Heart left ventricle (tissue), 16 donors: ENCODE measurements at regions of chr3 and their contacts with region 1.

Region 1: GRCh38 chr3:111967651-111968274 is 11.1 kb upstream of the ABHD10 start:
- DNase-seq: peak; percentile 74 to 89 (median 82)
- ATAC-seq: peak; percentile 50 to 84 (median 76)
- H3K4me3 ChIP-seq: no peak overlapping the region
- H3K27ac ChIP-seq: peak overlapping the region in 11 of 12 donors; percentile 24 to 68 (median 58)
- H3K4me1 ChIP-seq: peaks cover 0 to 47% (median 25%) of the 10 kb centered on the region in 12 donors
- H3K27me3 ChIP-seq: no peaks in the 10 kb centered on the region
- CTCF ChIP-seq: peak; percentile 78 to 95 (median 88)
- POLR2A ChIP-seq: no peak

Region 2: GRCh38 chr3:111668912-111669488 is 298.8 kb before region 1 on chr3:
- intact Hi-C with region 1: loop called in 3 of 10 experiments (anchors 2 to 5 kb)
- DNase-seq: no peak
- ATAC-seq: peak; percentile 65 to 91 (median 83)
- H3K4me3 ChIP-seq: no peak overlapping the region
- H3K27ac ChIP-seq: peak overlapping the region in 1 of 12 donors; percentile 2
- H3K4me1 ChIP-seq: peaks cover 0 to 28% (median 8%) of the 10 kb centered on the region in 12 donors
- H3K27me3 ChIP-seq: no peaks in the 10 kb centered on the region
- CTCF ChIP-seq: peak; percentile 63 to 88 (median 78)
- POLR2A ChIP-seq: no peak

Region 3: GRCh38 chr3:111676211-111677006 is 291.4 kb before region 1 on chr3:
- intact Hi-C with region 1: loop called in 2 of 10 experiments (anchors 5 kb)
- DNase-seq: no peak
- ATAC-seq: no peak
- H3K4me3 ChIP-seq: peak overlapping the region in 2 of 12 donors; percentile 70 to 71
- H3K27ac ChIP-seq: no peak overlapping the region
- H3K4me1 ChIP-seq: peaks cover 0 to 32% (median 14%) of the 10 kb centered on the region in 12 donors
- H3K27me3 ChIP-seq: no peaks in the 10 kb centered on the region
- CTCF ChIP-seq: no peak
- POLR2A ChIP-seq: no peak

Region 4: DNA sequence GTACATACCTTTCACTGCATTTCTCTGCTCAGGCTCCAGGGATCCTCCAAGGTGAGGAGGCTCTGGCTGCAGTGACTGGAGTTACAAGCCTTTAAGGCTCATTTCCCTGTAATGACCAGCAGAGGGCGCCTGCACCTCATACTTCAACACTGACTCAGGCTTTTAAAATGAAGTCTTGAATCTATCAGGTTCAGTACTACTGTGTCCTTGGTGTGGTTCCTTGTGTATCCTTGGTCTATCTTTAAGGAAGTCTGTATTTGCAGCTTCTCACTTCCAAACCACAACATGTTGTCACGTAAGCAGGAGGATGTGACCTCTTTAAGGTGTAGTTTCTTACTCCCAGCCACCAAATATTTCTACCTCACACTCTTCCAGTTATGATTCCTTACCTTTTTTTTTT is 250.2 kb before region 1 on chr3:
- intact Hi-C with region 1: loop called (anchors 1 to 2 kb)
- DNase-seq: peak in 4 of 5 donors; percentile 71 to 79 (median 75)
- ATAC-seq: peak; percentile 71 to 90 (median 90)
- H3K4me3 ChIP-seq: no peak overlapping the region
- H3K27ac ChIP-seq: peak overlapping the region in 7 of 12 donors; percentile 8 to 49 (median 28)
- H3K4me1 ChIP-seq: peaks cover 0 to 29% (median 11%) of the 10 kb centered on the region in 12 donors
- H3K27me3 ChIP-seq: no peaks in the 10 kb centered on the region
- CTCF ChIP-seq: peak; percentile 91 to 99 (median 95)
- POLR2A ChIP-seq: no peak

Region 5: GRCh38 chr3:111737706-111738086 is 230.1 kb before region 1 on chr3:
- intact Hi-C with region 1: loop called in 1 of 10 experiments (anchors 5 kb)
- DNase-seq: peak in 4 of 5 donors; percentile 58 to 76 (median 72)
- ATAC-seq: peak; percentile 77 to 88 (median 79)
- H3K4me3 ChIP-seq: no peak overlapping the region
- H3K27ac ChIP-seq: peak overlapping the region; percentile 74 to 88 (median 82)
- H3K4me1 ChIP-seq: peaks cover 7 to 67% (median 50%) of the 10 kb centered on the region in 12 donors
- H3K27me3 ChIP-seq: no peaks in the 10 kb centered on the region
- CTCF ChIP-seq: no peak
- POLR2A ChIP-seq: no peak

Region 6: GRCh38 chr3:111924283-111924682 is 43.5 kb before region 1 on chr3:
- intact Hi-C with region 1: loop called in 1 of 10 experiments (anchors 5 kb)
- DNase-seq: peak; percentile 69 to 83 (median 73)
- ATAC-seq: peak; percentile 95 to 98 (median 98)
- H3K4me3 ChIP-seq: no peak overlapping the region
- H3K27ac ChIP-seq: peak overlapping the region in 11 of 12 donors; percentile 12 to 76 (median 51)
- H3K4me1 ChIP-seq: peaks cover 0 to 46% (median 25%) of the 10 kb centered on the region in 12 donors
- H3K27me3 ChIP-seq: no peaks in the 10 kb centered on the region
- CTCF ChIP-seq: no peak
- POLR2A ChIP-seq: no peak

Region 7: GRCh38 chr3:111932946-111933345 is 34.8 kb before region 1 on chr3:
- intact Hi-C with region 1: loop called in 2 of 10 experiments (anchors 5 kb)
- DNase-seq: no peak
- ATAC-seq: peak in 2 of 4 donors; percentile 19 to 31
- H3K4me3 ChIP-seq: no peak overlapping the region
- H3K27ac ChIP-seq: peak overlapping the region in 2 of 12 donors; percentile 11 to 13
- H3K4me1 ChIP-seq: peaks cover 0 to 56% (median 26%) of the 10 kb centered on the region in 12 donors
- H3K27me3 ChIP-seq: no peaks in the 10 kb centered on the region
- CTCF ChIP-seq: no peak
- POLR2A ChIP-seq: no peak